CD4-positive, alpha-beta memory T cell (primary cell): ENCODE measurements at regions of chr4 and their contacts with region 1.

Region 1: GRCh38 chr4:128287871-128288688 is 467 bp upstream of the PGRMC2 start:
- DNase-seq: peak; percentile 97 to 100 (median 99)
- H3K4me3 ChIP-seq: peak overlapping the region; percentile 33 to 87
- H3K4me3 Mint-ChIP-seq: peak overlapping the region; percentile 81 to 91 (median 88)
- H3K27ac ChIP-seq: peak overlapping the region; percentile 88
- H3K27ac Mint-ChIP-seq: peak overlapping the region; percentile 80 to 97 (median 96)
- H3K4me1 ChIP-seq: peaks cover 43% of the 10 kb centered on the region
- H3K4me1 Mint-ChIP-seq: peaks cover 24 to 42% (median 31%) of the 10 kb centered on the region in 4 donors
- H3K27me3 ChIP-seq: no peaks in the 10 kb centered on the region
- H3K27me3 Mint-ChIP-seq: no peaks in the 10 kb centered on the region

Region 2: DNA sequence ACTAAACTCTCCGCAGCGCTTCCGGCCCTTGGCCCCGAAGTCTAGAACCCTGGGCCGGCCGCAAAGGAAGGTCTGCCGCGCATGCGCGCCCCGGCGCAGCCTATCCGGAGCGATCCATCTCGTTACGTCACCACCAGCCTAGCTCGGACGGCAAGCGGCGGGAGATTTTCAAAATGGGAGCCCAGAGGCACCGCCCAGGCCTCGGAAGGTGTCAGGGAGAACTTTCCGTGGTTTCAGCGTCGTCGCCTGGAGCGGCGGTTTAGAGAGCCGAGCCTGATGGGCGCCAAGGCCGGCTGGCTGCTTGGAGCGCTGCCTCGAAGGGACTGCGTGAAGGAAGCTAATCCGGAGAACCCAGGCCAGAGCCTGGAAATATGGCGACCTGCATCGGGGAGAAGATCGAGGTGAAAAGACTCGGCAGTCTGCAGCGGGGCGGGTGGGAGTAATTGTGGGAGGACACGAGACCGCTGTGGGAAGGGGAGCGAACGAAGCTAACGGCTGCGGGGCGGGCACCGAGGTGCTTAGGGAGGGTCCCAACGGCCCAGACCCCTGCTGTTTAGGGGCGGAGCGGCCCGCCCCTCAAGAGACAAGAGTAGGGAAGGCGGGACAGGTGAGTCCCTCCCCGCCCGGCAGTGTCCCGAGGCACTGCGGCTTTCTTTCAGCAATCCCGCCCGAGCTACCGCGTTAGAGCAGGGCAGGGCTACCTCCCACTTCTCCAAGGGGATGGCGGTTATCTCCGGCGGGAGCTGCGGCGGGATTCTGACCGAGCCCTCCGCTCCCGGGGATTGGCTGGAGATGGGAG is 407.1 kb before region 1 on chr4 and contains the start of gene PLK4:
- CTCF ChIA-PET with region 1: no interaction called
- POLR2A ChIA-PET with region 1: interaction called, 6 read pairs
- intact Hi-C with region 1: loop called (anchors 1 kb)
- DNase-seq: peak; percentile 92 to 95 (median 93)
- H3K4me3 ChIP-seq: peak within 1 kb of the TSS; percentile 79 to 93
- H3K4me3 Mint-ChIP-seq: peak within 1 kb of the TSS; percentile 96 to 100 (median 97)
- H3K27ac ChIP-seq: peak within 1 kb of the TSS; percentile 68
- H3K27ac Mint-ChIP-seq: peak within 1 kb of the TSS; percentile 96 to 100 (median 98)
- H3K4me1 ChIP-seq: peaks cover 14% of the 10 kb centered on the region
- H3K4me1 Mint-ChIP-seq: peaks cover 8 to 28% (median 18%) of the 10 kb centered on the region in 4 donors
- H3K27me3 ChIP-seq: no peaks in the 10 kb centered on the region
- H3K27me3 Mint-ChIP-seq: no peaks in the 10 kb centered on the region
- total RNA-seq, gene PLK4: 1.1 to 2.6 TPM

Region 3: GRCh38 chr4:128256539-128256938 is 31.5 kb before region 1 on chr4:
- CTCF ChIA-PET with region 1: no interaction called
- POLR2A ChIA-PET with region 1: no interaction called
- intact Hi-C with region 1: no loop called
- DNase-seq: no peak
- H3K4me3 ChIP-seq: no peak overlapping the region
- H3K4me3 Mint-ChIP-seq: no peak overlapping the region
- H3K27ac ChIP-seq: no peak overlapping the region
- H3K27ac Mint-ChIP-seq: no peak overlapping the region
- H3K4me1 ChIP-seq: no peaks in the 10 kb centered on the region
- H3K4me1 Mint-ChIP-seq: no peaks in the 10 kb centered on the region
- H3K27me3 ChIP-seq: no peaks in the 10 kb centered on the region
- H3K27me3 Mint-ChIP-seq: peaks cover 9 to 34% of the 10 kb centered on the region in 2 donors

Region 4: DNA sequence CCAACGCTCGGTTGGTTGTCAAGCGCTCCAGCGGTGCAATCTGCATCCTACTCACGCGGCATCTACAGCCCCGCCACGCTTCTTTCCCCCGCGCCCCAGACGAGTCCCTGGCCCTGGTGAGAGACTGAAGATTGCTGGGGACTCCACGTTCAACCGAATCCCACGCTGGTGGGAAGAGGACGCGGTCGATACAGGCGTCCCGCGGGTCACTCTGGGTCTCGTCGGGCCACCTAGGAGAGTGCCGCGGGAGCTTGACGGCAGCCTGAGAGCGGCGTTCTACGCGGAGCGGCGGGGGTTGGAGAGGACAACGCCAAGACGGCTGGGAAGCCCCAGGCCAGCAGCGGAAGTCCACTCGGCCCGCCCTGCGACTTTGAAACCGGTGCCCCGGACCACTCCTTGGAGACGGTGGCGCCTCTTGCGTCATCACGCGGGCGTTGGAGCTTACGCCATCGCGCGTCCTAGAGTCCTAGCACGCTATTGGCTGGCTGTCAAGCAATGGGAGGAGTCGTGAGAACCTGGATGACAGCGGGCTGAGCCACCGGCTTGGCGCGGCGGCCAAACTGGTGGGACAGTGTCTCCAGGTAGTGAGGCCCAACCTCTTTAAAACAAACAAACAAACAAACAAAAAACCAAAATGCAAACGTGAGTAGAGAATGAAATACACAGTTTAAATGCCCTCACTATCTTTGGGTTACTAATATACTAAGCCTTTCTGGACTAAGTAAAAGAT is 805.3 kb after region 1 on chr4 and contains the start of gene SCLT1:
- CTCF ChIA-PET with region 1: interaction called, 3 read pairs
- POLR2A ChIA-PET with region 1: interaction called, 8 read pairs
- intact Hi-C with region 1: loop called (anchors 1 kb)
- DNase-seq: peak; percentile 93 to 98 (median 95)
- H3K4me3 ChIP-seq: peak within 1 kb of the TSS; percentile 71 to 98
- H3K4me3 Mint-ChIP-seq: peak within 1 kb of the TSS in 6 of 8 donors; percentile 10 to 57 (median 30)
- H3K27ac ChIP-seq: peak within 1 kb of the TSS; percentile 99
- H3K27ac Mint-ChIP-seq: peak within 1 kb of the TSS in 2 of 7 donors; percentile 33 to 95
- H3K4me1 ChIP-seq: peaks cover 63% of the 10 kb centered on the region
- H3K4me1 Mint-ChIP-seq: peaks cover 30 to 47% (median 38%) of the 10 kb centered on the region in 4 donors
- H3K27me3 ChIP-seq: no peaks in the 10 kb centered on the region
- H3K27me3 Mint-ChIP-seq: no peaks in the 10 kb centered on the region
- total RNA-seq, gene SCLT1: 18.2 to 20.8 TPM